Aorta (tissue), 5 donors: ENCODE measurements at regions of chr16 and their contacts with region 1.

Region 1: DNA sequence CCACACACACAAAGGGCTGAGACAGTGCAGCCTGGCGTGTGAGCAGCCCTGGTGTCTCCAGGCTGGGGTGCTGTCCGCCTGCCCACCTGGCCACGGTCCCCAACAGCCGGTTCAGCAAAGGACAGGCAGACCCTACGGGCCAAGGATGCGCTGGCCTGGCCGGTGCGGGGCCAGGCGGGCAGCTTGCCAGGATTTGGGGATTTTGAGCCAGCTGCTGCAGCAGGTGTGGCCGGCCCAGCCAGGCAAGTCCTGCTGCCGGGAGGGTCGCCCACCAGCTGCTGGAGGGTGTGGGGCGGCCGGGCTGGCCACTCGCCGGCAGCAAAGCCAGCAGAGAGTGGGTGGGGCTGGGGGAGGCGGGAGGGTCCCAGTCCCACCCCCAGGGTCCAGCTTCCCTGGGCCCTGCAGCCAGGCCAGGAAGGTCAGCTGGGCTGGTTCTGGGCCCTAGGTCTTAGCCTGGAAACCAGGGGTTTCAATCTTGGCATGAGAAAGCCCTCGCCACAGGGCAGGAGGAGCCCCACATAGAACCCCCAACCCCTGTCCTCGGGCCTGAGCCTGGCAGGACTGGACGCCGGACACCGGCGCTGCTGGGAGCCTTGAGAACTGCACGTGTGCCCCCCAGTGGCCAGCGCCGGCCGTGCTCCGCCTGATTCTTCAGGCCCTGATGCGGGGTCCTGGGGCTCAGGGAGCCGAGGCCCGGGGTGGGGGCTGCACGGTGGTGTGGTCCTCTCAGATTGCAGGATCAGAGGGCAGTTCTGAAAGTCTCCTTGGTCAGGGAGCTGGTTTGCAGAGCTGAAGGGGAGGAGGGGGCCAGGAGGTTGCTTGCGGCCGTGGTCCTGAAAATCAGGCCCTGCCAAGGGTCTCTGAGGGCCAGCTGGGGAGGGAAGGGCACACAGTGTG is 17.6 kb upstream of the SSTR5 start:
- DNase-seq: peak; percentile 73 to 91
- ATAC-seq: peak; percentile 70
- H3K4me3 ChIP-seq: no peak overlapping the region
- H3K27ac ChIP-seq: no peak overlapping the region
- H3K4me1 ChIP-seq: no peaks in the 10 kb centered on the region
- H3K27me3 ChIP-seq: no peaks in the 10 kb centered on the region

Region 2: DNA sequence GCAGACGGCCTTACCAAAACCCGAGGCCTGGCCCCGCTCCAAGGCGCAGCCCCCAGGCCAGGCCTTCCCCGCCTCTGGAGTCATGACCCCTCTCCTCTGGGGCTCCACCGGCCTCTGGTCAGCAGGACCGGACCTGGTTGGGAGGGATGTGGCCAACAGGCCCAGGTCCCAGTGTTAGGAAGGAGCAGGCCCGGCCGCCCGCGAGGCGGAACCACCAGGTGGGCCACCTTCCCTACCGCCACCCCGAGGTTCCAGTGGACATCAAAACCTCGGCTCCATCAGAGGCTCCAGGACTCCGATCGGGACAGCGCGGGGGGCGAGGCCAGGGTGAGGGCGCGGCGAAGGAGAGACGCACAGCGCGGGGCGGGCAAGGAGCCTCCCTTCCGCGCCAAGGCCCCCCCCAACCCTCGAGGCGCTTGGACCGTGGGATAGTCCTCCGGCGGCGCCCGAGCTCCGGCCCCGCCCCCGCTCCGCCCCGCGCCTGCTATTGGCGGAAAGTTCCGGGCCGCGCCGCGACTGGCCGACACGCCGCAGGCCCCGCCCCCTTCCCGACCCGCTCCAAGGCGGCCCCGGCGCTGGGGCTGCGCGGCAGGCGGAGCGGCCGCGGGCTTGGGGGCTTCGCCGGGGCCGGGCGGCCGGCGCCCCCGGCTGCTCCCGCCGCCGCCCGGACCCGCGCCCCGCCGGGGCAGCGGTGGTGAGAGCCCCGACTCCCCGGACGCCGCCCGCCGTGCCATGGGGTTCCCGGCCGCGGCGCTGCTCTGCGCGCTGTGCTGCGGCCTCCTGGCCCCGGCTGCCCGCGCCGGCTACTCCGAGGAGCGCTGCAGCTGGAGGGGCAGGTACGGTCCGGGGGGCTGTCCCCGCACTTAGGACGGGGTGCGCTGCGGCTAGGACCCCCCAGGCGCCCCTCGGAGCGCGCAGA is 340.1 kb before region 1 on chr16 and contains the start of gene METRN:
- intact Hi-C with region 1: loop called (anchors 1 to 5 kb)
- DNase-seq: peak; percentile 94 to 98
- ATAC-seq: peak; percentile 91
- H3K4me3 ChIP-seq: peak within 1 kb of the TSS; percentile 50 to 64
- H3K27ac ChIP-seq: no peak within 1 kb of the TSS
- H3K4me1 ChIP-seq: no peaks in the 10 kb centered on the region
- H3K27me3 ChIP-seq: no peaks in the 10 kb centered on the region
- total RNA-seq, gene METRN: 22.7 to 26.6 TPM

Region 3: DNA sequence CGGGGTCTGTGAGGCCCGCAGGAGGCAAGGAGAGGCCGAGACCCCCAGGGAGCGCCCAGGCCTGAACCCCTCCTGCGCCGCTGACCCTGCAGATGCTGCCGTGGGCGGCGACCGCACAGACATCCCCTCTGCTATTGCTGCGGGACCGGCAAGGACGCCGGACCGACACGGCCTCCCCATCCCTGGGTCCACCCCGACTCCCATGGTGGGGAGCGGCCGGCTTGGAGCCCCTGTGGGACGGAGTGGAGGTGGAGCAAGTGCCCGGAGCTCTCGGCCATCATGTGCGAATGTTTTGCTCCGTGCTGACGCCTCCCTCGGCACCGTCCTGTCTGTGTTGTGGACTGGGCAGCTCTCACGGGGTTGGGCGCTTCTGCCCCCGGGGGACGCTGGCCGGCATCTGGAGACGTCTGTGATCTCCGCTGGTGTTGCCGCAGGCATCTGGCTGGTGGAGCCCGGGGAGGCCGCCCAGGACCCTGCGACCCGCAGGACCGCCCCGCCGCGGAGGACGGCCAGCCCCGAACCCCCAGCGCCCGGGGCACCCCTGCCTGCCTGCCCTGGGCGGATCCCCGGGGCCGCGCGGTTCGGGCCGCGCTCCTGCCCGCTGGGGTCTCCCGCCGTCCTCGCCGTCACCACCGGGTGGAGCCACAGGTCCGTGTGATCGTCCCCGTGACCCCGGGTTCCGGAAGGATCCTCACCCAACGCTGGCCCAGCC is 241.5 kb before region 1 on chr16:
- intact Hi-C with region 1: loop called (anchors 10 kb)
- DNase-seq: no peak
- ATAC-seq: peak; percentile 55
- H3K4me3 ChIP-seq: no peak overlapping the region
- H3K27ac ChIP-seq: no peak overlapping the region
- H3K4me1 ChIP-seq: no peaks in the 10 kb centered on the region
- H3K27me3 ChIP-seq: no peaks in the 10 kb centered on the region

Region 4: DNA sequence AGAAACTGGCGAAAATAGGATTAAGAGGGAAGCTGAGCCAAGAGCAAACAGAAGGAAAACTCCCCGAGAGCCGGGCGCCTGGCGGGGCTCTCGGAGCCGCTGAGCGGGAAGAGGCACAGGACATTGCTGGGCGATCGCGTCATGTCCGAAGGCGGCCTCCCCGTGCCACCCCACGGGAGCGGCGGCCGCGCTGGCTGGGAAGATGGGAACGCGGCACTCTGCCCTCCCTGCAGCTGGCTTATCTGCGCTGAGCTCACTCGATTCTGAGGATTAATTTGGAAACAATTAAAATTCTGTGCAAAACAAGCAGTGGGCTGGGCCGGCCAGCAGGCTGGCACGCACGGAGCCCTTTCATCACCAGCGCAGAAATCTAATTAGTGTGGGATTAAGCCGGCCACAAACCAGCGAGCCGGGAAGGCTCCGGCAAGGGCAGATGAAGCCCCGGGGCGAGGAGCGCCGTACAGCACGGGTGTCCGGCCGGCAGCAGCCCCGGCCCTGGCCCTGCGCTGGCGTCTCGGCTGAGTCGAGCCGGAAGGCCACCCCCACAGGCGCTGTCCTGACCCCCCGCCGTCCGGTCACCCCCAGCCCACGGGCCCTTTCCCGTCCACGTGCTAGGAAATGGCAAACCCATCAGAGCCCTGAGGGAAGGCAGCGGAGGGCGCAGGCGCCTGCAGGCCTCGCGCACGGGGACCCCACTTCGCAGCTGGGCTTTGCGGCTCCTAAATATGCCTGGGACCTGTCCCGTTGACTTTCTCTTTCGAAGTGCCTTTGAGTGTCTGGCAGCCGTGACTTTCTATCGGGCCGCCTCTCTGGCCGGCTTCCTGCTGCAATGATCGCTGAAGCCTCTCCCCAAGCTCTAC is 35.4 kb before region 1 on chr16:
- intact Hi-C with region 1: no loop called
- DNase-seq: peak; percentile 78 to 92
- ATAC-seq: peak; percentile 78
- H3K4me3 ChIP-seq: no peak overlapping the region
- H3K27ac ChIP-seq: peak overlapping the region in 1 of 2 donors; percentile 53
- H3K4me1 ChIP-seq: no peaks in the 10 kb centered on the region
- H3K27me3 ChIP-seq: no peaks in the 10 kb centered on the region

Region 5: DNA sequence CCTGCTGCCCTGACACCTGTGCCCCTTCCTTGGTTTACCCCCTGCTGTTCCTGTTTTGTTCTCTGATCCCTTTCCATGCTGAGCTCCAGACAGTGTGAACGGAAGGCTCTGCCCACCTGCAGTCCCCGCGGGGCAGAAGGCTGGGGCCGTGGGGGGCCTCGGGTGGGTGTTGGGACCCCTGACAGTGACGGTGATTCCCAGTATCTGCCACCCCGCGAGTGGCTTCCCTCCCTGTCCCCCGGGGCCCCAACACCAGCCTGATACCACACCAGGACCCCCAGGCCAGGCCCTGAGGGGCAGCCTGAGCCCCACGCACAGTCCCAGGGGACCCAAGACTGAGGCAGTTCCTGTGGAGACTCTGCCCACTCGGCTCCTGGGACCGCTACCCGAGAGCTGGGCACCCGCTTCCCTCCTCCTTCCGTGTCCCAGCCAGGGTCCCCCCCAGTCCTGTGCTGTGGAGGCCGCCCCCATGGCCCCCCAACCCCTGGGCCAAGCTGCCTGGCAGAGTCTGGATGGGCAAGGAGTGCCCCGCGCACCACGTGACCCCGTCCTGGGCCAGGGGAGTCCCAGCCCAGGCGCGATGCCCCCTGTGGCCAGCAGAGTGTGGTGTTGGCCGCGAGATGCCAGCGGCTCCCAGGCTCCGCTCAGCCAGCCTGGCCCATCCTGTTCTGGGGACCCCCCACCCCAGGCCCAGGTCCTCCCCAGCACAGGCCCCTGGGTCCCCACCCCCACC is 51.1 kb after region 1 on chr16:
- intact Hi-C with region 1: loop called (anchors 1 to 2 kb)
- DNase-seq: peak; percentile 67 to 91
- ATAC-seq: peak; percentile 72
- H3K4me3 ChIP-seq: no peak overlapping the region
- H3K27ac ChIP-seq: no peak overlapping the region
- H3K4me1 ChIP-seq: no peaks in the 10 kb centered on the region
- H3K27me3 ChIP-seq: no peaks in the 10 kb centered on the region

Region 6: GRCh38 chr16:1194665-1195392 is 139.9 kb after region 1 on chr16:
- intact Hi-C with region 1: loop called (anchors 5 kb)
- DNase-seq: no peak
- ATAC-seq: no peak
- H3K4me3 ChIP-seq: no peak overlapping the region
- H3K27ac ChIP-seq: no peak overlapping the region
- H3K4me1 ChIP-seq: no peaks in the 10 kb centered on the region
- H3K27me3 ChIP-seq: no peaks in the 10 kb centered on the region

Region 7: GRCh38 chr16:1237990-1238389 is 183.1 kb after region 1 on chr16:
- intact Hi-C with region 1: no loop called
- DNase-seq: no peak
- ATAC-seq: no peak
- H3K4me3 ChIP-seq: no peak overlapping the region
- H3K27ac ChIP-seq: no peak overlapping the region
- H3K4me1 ChIP-seq: no peaks in the 10 kb centered on the region
- H3K27me3 ChIP-seq: no peaks in the 10 kb centered on the region